ENCODE measurements at regions of chr16 and their contacts with region 1.

Region 1: DNA sequence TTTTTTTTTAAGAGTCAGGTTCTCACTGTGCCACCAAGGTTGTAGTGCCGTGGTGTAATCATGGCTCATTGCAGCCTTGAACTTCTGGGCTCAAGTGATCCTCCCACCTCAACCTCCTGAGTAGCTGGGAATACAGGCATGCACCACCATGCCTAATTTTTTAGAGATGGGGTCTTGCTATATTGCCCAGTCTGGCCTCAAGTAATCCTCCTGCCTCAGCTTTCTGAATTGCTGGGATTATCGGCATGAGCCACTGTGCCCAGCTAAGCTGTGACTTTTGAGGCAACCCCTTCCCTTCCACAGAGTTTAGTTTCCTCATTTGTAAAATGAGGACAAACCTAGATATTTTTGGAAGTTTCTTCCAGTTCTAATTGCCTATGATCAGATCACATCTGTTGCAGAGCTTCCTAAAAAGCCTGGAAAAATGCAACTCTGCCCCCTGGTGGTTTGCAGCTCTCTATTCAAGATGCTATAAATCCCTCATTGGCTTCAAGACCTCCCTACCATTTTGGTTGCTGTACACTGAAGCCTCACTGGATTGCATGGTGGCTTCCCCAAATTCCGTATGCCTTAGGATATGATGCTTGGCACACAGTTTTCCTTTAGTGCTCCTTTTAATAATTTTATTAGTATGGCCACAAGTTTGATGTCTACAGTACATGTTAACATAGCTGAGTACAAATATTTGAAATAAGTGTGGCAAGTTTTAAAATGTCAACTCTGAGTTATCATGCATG is 19.3 kb downstream of the GDE1 start:
- DNase-seq: peak; percentile 76
- ATAC-seq: peak; percentile 78
- H3K4me3 Mint-ChIP-seq: no peak overlapping the region
- H3K27ac Mint-ChIP-seq: no peak overlapping the region
- H3K4me1 Mint-ChIP-seq: peaks cover 11% of the 10 kb centered on the region
- H3K27me3 Mint-ChIP-seq: no peaks in the 10 kb centered on the region

Region 2: DNA sequence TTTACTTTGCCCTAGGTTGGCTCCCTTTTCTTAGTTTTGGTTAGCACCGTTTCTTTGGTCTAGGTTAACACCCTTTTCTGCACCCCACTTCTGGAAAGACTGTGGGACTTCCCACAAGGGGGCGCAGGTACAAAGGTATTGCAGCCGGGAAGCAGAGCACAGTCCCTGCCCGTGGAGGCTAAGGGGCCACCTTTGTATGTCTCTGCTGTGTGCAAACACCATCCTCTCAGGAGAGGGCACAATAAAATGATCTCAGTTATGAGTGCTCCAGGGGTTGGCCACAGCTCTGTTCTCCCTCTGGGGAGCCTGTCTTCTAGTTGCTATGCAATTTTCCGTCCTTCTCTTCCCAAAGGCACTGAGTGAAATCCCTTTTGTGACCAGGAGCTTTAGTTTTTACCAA is 113.3 kb before region 1 on chr16:
- CTCF ChIA-PET with region 1: interaction called, 21 read pairs
- DNase-seq: peak; percentile 72
- ATAC-seq: peak; percentile 82
- H3K4me3 Mint-ChIP-seq: no peak overlapping the region
- H3K27ac Mint-ChIP-seq: no peak overlapping the region
- H3K4me1 Mint-ChIP-seq: peaks cover 5% of the 10 kb centered on the region
- H3K27me3 Mint-ChIP-seq: peaks cover 38% of the 10 kb centered on the region

Region 3: DNA sequence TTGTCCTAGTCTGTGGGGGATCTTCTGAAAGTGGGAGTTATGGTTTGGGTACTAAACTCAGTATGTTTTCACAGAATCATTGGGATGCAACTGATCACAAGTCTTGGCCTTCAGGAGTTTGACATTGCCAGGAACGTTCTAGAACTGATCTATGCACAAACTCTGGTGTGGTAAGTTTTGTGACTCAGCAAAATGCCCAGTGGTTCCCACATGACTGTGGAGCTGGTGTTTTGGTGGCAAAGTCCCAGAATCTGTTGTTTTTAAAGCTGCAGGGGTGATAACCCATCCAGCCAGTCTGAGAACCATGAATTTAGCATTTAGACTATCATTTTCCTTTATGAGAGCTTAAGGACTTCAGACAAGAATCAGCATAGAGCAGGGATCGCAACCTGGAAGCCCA is 21.3 kb before region 1 on chr16:
- CTCF ChIA-PET with region 1: no interaction called
- DNase-seq: no peak
- ATAC-seq: no peak
- H3K4me3 Mint-ChIP-seq: no peak overlapping the region
- H3K27ac Mint-ChIP-seq: no peak overlapping the region
- H3K4me1 Mint-ChIP-seq: no peaks in the 10 kb centered on the region
- H3K27me3 Mint-ChIP-seq: peaks cover 4% of the 10 kb centered on the region

Region 4: DNA sequence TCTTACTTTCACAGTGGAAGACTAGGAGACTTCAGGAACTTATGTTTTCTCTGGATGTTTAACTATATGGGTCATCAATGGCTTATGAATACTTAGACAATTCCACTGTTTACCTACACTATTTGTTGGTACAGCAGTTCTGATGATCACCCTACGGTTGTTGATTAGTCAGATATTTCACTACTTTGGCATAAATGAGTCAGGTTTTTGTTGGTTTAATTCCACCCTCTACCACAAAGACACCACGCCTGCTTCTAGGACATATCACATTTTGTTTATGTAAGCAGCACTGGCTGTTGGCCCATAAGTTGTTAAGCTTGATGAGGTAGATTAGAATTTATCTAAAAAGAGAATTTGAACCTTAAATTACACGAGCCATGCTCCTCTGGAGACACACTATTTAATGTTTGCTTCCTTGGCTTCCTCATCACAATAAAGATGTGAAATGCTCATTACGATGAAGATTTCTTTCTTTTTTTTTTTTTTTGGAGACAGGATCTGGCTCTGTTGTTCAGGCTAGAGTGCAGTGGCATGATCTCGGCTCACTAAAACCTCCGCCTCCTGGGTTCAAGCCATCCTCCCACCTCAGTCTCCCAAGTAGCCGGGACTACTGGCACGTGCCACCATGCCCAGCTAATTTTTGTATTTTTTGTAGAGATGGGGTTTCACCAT is 15.0 kb after region 1 on chr16:
- CTCF ChIA-PET with region 1: interaction called, 14 read pairs
- DNase-seq: peak; percentile 58
- ATAC-seq: peak; percentile 16
- H3K4me3 Mint-ChIP-seq: no peak overlapping the region
- H3K27ac Mint-ChIP-seq: peak overlapping the region; percentile 45
- H3K4me1 Mint-ChIP-seq: peaks cover 51% of the 10 kb centered on the region
- H3K27me3 Mint-ChIP-seq: no peaks in the 10 kb centered on the region